PC-9 (cell line): ENCODE measurements at regions of chr3 and their contacts with region 1.

Region 1: DNA sequence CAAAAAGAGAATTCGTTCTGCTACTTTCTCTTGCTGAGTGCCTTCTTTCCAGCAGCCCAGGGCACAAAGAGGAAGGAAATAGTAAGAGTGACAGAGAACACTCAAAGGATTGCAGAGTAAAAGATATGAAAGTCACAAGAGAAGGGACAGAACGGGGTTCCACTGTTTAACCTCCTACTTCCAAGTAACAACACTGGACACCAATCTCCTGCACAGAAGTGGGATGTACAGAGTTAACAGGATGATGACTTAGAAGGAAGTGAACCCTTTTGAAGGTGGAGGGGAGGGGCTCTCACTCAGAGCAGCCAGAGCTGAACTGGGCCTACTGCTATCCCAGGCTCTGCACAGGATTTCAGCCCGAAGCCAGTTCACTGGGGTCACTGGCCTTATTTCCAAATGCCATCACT is 130.1 kb upstream of the PRICKLE2 start:
- DNase-seq: peak; percentile 61 to 69
- H3K4me3 ChIP-seq: no peak overlapping the region
- H3K27ac ChIP-seq: peak overlapping the region; percentile 46; the same call in 1 of the 2 replicates
- H3K4me1 ChIP-seq: peaks cover 29% of the 10 kb centered on the region
- H3K27me3 ChIP-seq: no peaks in the 10 kb centered on the region
- CTCF ChIP-seq: no peak

Region 2: GRCh38 chr3:64174328-64174727 is 181.1 kb before region 1 on chr3:
- CTCF ChIA-PET with region 1: no interaction called
- POLR2A ChIA-PET with region 1: no interaction called
- intact Hi-C with region 1: loop called (anchors 5 kb)
- DNase-seq: peak; percentile 65 to 66
- H3K4me3 ChIP-seq: no peak overlapping the region
- H3K27ac ChIP-seq: 0 out of 2 replicates have a peak overlapping the region, but pooled peaks have one; percentile 17
- H3K4me1 ChIP-seq: peaks cover 24% of the 10 kb centered on the region
- H3K27me3 ChIP-seq: no peaks in the 10 kb centered on the region
- CTCF ChIP-seq: no peak

Region 3: GRCh38 chr3:64267721-64268604 is 87.4 kb before region 1 on chr3:
- CTCF ChIA-PET with region 1: interaction called, 7 read pairs
- POLR2A ChIA-PET with region 1: interaction called, 4 read pairs
- intact Hi-C with region 1: loop called (anchors 5 kb)
- DNase-seq: peak in 1 of 2 experiments; percentile 22
- H3K4me3 ChIP-seq: peak overlapping the region; percentile 50; the same call in 1 of the 2 replicates
- H3K27ac ChIP-seq: no peak overlapping the region
- H3K4me1 ChIP-seq: no peaks in the 10 kb centered on the region
- H3K27me3 ChIP-seq: no peaks in the 10 kb centered on the region
- CTCF ChIP-seq: no peak

Region 4: GRCh38 chr3:64321747-64322146 is 33.7 kb before region 1 on chr3:
- CTCF ChIA-PET with region 1: no interaction called
- POLR2A ChIA-PET with region 1: interaction called, 11 read pairs
- intact Hi-C with region 1: no loop called
- DNase-seq: peak; percentile 35 to 52
- H3K4me3 ChIP-seq: no peak overlapping the region
- H3K27ac ChIP-seq: no peak overlapping the region
- H3K4me1 ChIP-seq: no peaks in the 10 kb centered on the region
- H3K27me3 ChIP-seq: no peaks in the 10 kb centered on the region
- CTCF ChIP-seq: no peak

Region 5: DNA sequence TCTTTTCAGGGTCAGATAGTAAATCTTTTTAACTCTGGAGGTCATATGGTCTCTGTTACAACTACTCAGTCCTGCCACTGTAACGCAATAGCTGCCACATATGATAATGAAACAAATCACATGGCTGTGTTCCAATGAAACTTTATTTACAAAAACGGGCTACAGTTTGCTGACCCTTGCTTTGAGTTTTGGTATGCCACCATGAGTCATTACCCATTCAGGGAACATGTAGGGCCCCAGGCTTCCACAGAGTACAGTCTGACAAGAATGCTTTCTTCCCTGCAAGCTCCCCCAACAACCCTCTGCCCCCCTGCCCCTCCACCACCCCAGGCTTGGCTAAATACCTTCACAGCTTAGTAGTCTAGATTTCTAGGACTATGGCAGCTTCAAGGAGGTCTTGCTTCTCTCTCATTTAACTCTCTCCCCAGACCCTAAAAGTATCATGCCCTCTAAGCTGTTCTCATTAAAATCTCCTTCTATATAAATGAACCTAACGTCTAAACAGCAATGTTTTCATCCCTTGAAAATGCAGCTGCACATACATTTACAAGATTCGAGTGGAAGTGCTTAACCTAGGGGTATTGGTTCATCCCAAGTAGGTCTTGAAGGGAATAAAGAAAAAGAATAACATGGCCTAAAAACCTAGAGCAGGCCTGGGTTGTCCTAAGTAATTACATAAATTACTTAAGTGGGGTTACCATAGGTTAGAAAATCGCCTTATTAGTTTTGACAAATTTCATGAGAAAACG is 12.3 kb before region 1 on chr3:
- CTCF ChIA-PET with region 1: interaction called, 10 read pairs
- POLR2A ChIA-PET with region 1: interaction called, 3 read pairs
- intact Hi-C with region 1: loop called (anchors 1 kb)
- DNase-seq: peak; percentile 55 to 84
- H3K4me3 ChIP-seq: no peak overlapping the region
- H3K27ac ChIP-seq: peak overlapping the region; percentile 61
- H3K4me1 ChIP-seq: peaks cover 35% of the 10 kb centered on the region
- H3K27me3 ChIP-seq: no peaks in the 10 kb centered on the region
- CTCF ChIP-seq: no peak

Region 6: DNA sequence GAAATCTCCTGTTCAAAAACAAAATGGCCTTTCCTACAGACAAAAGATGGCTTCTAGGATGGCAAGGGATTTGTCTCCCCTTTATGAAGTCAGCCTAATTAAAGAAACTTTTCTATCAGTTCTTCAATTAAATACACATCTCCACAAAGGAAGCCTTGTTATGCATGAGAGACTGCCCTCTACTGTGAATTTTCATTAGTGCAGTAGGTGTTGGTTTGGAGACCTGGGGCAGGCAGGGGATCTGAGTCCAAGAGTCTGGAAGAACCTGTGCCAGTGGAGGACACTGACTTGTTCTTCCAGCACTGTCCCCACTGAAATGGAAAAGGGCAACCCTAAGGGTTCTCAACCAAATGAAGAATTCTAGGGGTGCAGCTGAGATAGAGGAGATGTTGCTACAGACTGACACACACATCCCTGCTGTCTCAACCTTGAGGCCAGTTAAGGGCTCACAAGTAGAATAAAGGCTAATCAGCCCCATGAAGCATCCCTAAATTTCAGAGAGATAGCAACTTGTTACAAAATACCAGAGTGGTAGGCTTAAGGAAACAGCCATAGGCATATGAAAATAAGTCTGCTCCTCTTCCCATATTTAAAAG is 43.9 kb after region 1 on chr3:
- CTCF ChIA-PET with region 1: no interaction called
- POLR2A ChIA-PET with region 1: no interaction called
- intact Hi-C with region 1: loop called (anchors 5 kb)
- DNase-seq: peak in 1 of 2 experiments; percentile 35
- H3K4me3 ChIP-seq: no peak overlapping the region
- H3K27ac ChIP-seq: no peak overlapping the region
- H3K4me1 ChIP-seq: no peaks in the 10 kb centered on the region
- H3K27me3 ChIP-seq: no peaks in the 10 kb centered on the region
- CTCF ChIP-seq: peak; percentile 76